ENCODE measurements at regions of chr17 and their contacts with region 1.

Region 1: DNA sequence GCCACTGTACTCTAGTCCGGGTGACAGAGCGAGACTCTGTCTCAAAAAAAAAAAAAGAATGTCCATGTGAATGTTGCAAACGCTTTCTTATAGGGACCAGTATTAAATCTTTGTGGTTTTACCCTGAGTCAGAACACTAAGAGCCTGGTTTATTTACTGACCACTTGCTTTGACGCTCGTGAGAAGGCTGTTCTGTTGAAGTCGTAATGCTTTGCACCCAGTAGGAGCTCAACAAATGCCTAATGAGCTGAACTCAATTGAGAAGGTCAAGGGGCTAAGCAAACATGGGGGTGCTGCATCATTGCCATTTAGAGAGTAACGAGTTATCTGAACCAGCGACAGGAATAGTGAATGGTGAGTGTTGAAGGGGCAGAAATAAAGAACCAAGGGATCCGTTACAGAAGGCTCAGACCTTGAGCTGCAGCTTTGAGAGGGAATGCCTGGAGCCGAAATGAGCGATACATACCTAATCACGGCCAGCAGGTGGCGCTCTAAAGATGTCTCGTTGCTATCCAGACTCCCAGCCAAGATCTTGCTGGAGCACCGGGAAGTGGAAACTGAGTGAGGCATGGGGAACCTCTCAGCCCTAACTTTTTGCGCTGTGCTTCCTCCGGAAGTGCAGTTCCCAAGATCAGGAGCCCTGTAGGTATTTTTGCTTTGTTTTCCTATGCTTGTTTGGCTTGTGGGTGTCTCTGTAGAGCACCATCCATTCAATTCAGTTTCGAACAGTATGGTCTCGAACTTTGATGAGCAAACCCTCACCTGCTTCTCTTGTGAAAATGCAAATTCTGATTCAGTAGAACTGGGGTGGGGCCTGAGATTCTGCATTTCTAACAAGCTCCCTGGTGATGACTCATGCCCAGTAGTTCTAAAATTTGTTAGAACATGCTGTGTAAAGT is 12.6 kb upstream of the RNF222 start:
- DNase-seq: peak; percentile 88 to 96 (median 91)
- H3K4me3 ChIP-seq: no peak overlapping the region
- H3K27ac ChIP-seq: no peak overlapping the region
- H3K4me1 ChIP-seq: no peaks in the 10 kb centered on the region
- H3K27me3 ChIP-seq: no peaks in the 10 kb centered on the region
- CTCF ChIP-seq: peak; percentile 86 to 93 (median 89)
- POLR2A ChIP-seq: no peak

Region 2: DNA sequence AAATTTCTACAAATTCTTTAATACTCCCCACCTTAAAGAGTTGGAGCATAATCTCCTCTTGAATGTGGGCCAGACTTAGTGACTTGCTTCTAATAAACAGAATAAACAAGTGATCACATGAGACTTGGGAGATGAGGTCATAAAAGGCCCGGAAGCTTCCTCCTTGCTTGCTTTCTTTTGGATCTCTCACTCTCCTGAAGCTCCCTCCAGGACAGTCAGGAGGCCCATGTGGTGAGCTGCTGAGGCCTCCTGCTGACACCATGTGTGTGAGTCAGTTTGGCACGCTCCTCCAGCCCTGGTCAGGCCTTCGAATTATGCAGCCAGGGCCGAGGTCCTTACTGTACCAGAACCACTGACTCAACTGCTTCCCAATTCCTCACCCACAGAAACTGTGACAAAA is 78.7 kb after region 1 on chr17:
- intact Hi-C with region 1: no loop called
- DNase-seq: peak; percentile 66 to 86 (median 80)
- H3K4me3 ChIP-seq: no peak overlapping the region
- H3K27ac ChIP-seq: peak overlapping the region in 3 of 5 donors; percentile 31 to 69 (median 44)
- H3K4me1 ChIP-seq: no peaks in the 10 kb centered on the region
- H3K27me3 ChIP-seq: no peaks in the 10 kb centered on the region
- CTCF ChIP-seq: no peak
- POLR2A ChIP-seq: no peak

Region 3: GRCh38 chr17:8740486-8740885 is 330.3 kb after region 1 on chr17:
- intact Hi-C with region 1: loop called (anchors 5 to 10 kb)
- DNase-seq: no peak
- H3K4me3 ChIP-seq: no peak overlapping the region
- H3K27ac ChIP-seq: no peak overlapping the region
- H3K4me1 ChIP-seq: no peaks in the 10 kb centered on the region
- H3K27me3 ChIP-seq: no peaks in the 10 kb centered on the region
- CTCF ChIP-seq: no peak
- POLR2A ChIP-seq: no peak